ENCODE measurements at regions of chr5 and their contacts with region 1.

Region 1: DNA sequence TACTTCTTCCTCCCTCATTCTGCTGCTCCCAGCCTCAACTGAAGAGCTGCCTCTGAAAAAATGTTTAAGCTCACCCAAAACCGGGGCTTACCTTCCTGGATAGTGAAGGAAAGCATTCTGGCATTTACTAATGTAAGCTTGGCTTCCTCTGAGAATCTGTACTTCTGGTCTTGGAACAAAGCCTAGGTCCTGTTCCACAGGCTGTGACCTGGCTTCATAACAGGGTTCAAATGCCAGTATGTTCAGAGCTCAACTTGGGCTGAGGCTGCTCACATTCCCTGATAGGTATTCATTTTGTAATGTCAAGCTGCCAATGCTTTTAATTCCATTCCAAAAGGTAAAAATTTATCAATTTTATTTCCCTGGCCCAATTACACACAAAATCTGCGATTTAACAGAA is 411.7 kb upstream of the KCNN2 start:
- DNase-seq: no peak
- ATAC-seq: peak in 3 of 8 donors; percentile 48 to 53 (median 50)
- H3K4me3 ChIP-seq: no peak overlapping the region
- H3K27ac ChIP-seq: no peak overlapping the region
- H3K4me1 ChIP-seq: peaks cover 0 to 4% (median 0%) of the 10 kb centered on the region in 9 donors
- H3K27me3 ChIP-seq: no peaks in the 10 kb centered on the region
- CTCF ChIP-seq: no peak

Region 2: DNA sequence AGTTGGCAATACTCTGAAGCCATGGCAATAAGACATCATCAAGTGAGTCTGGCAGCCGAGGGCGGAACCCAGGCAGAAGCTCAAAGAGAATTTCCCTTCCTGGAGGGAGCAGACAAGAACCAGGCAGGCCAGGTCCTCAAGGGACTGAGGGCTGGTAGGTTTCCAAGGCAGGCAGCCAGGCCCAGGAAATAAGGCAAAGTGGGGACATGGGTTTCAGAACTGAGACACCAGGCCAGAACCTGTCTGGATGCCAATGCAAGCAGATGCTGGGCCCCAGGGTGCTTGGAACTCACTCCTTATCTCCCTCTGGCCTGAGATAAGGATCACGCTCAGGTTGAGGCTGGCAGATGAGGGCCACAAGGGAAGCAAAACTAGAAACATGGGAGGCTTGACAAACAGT is 524.3 kb before region 1 on chr5:
- intact Hi-C with region 1: no loop called
- DNase-seq: peak in 1 of 2 donors; percentile 34
- ATAC-seq: peak in 1 of 8 donors; percentile 31
- H3K4me3 ChIP-seq: no peak overlapping the region
- H3K27ac ChIP-seq: no peak overlapping the region
- H3K4me1 ChIP-seq: no peaks in the 10 kb centered on the region
- H3K27me3 ChIP-seq: no peaks in the 10 kb centered on the region
- CTCF ChIP-seq: no peak

Region 3: DNA sequence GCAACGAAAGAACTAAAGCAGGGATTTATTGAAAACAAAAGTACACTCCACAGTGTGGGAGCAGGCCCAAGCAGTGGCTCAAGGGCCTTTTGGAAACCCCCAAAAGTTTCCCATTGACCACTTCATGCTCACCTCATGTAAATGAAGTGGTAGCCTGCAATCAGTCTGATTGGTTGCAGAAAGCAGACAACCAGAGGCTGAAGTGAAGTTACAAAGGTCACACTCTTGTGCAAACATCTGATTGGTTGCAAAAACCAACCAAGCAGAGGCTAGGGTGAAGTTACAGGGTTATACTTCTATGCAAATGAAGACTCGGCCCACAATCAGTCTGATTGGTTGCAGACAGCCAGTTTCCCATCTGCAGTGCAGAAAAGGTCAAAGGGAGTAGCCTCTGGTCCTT is 178.7 kb before region 1 on chr5:
- intact Hi-C with region 1: loop called in 1 of 10 experiments (anchors 5 kb)
- DNase-seq: no peak
- ATAC-seq: no peak
- H3K4me3 ChIP-seq: no peak overlapping the region
- H3K27ac ChIP-seq: no peak overlapping the region
- H3K4me1 ChIP-seq: no peaks in the 10 kb centered on the region
- H3K27me3 ChIP-seq: no peaks in the 10 kb centered on the region
- CTCF ChIP-seq: no peak